Ovary (tissue), 10 donors: ENCODE measurements at regions of chr15 and their contacts with region 1.

Region 1: GRCh38 chr15:81596159-81596865 is 222.3 kb upstream of the TMC3 start:
- DNase-seq: no peak
- H3K4me3 ChIP-seq: no peak overlapping the region
- H3K27ac ChIP-seq: no peak overlapping the region
- H3K4me1 ChIP-seq: no peaks in the 10 kb centered on the region
- H3K27me3 ChIP-seq: no peaks in the 10 kb centered on the region
- CTCF ChIP-seq: no peak
- EP300 ChIP-seq: no peak
- POLR2A ChIP-seq: no peak

Region 2: GRCh38 chr15:81536356-81536755 is 60.0 kb before region 1 on chr15:
- intact Hi-C with region 1: loop called in 1 of 4 experiments (anchors 5 kb)
- DNase-seq: no peak
- H3K4me3 ChIP-seq: no peak overlapping the region
- H3K27ac ChIP-seq: no peak overlapping the region
- H3K4me1 ChIP-seq: no peaks in the 10 kb centered on the region
- H3K27me3 ChIP-seq: no peaks in the 10 kb centered on the region
- CTCF ChIP-seq: no peak
- EP300 ChIP-seq: no peak
- POLR2A ChIP-seq: no peak